Gastrocnemius medialis (tissue), 4 donors: ENCODE measurements at regions of chr3 and their contacts with region 1.

Region 1: GRCh38 chr3:171503817-171504216 is 43.6 kb upstream of the TNIK start:
- DNase-seq: no peak
- ATAC-seq: no peak
- H3K4me3 ChIP-seq: no peak overlapping the region
- H3K27ac ChIP-seq: no peak overlapping the region
- H3K4me1 ChIP-seq: peaks cover 0 to 3% of the 10 kb centered on the region in 2 donors
- H3K27me3 ChIP-seq: no peaks in the 10 kb centered on the region
- CTCF ChIP-seq: no peak
- POLR2A ChIP-seq: no peak

Region 2: DNA sequence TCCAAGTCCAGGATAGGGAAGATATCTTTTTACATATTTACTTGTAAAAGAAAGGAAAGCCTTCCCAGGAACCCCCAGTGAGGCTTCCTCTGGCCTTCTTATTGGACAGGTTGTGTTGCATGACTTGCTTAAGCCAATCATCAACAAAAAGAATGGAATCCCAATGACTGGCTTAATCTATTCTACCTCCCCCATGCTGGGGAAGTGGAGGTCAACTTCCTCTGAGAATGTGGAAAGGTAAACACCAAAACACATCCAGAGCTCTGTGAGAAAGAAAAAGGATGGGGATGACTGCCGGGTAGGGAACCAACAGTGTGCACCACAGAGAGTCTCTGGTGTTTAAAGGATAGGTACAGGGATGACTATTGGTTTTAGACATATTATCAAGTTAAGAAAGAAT is 68.7 kb before region 1 on chr3:
- in situ Hi-C with region 1: no loop called
- intact Hi-C with region 1: loop called (anchors 2 kb)
- DNase-seq: no peak
- ATAC-seq: no peak
- H3K4me3 ChIP-seq: no peak overlapping the region
- H3K27ac ChIP-seq: no peak overlapping the region
- H3K4me1 ChIP-seq: peaks cover 22 to 27% of the 10 kb centered on the region in 2 donors
- H3K27me3 ChIP-seq: no peaks in the 10 kb centered on the region
- CTCF ChIP-seq: no peak
- POLR2A ChIP-seq: no peak